Activated naive CD4-positive, alpha-beta T cell treated with anti-CD3 and anti-CD28 coated beads for 36 hours (primary cell): ENCODE measurements at regions of chr1 and their contacts with region 1.

Region 1: GRCh38 chr1:25997828-25998761 is at the start of gene PAFAH2:
- DNase-seq: peak; percentile 99
- H3K4me3 Mint-ChIP-seq: peak within 1 kb of the TSS; percentile 97
- H3K27ac Mint-ChIP-seq: peak within 1 kb of the TSS; percentile 94
- H3K4me1 Mint-ChIP-seq: peaks cover 20% of the 10 kb centered on the region
- H3K27me3 Mint-ChIP-seq: no peaks in the 10 kb centered on the region
- total RNA-seq, gene PAFAH2: 4.7 to 5.2 TPM

Region 2: DNA sequence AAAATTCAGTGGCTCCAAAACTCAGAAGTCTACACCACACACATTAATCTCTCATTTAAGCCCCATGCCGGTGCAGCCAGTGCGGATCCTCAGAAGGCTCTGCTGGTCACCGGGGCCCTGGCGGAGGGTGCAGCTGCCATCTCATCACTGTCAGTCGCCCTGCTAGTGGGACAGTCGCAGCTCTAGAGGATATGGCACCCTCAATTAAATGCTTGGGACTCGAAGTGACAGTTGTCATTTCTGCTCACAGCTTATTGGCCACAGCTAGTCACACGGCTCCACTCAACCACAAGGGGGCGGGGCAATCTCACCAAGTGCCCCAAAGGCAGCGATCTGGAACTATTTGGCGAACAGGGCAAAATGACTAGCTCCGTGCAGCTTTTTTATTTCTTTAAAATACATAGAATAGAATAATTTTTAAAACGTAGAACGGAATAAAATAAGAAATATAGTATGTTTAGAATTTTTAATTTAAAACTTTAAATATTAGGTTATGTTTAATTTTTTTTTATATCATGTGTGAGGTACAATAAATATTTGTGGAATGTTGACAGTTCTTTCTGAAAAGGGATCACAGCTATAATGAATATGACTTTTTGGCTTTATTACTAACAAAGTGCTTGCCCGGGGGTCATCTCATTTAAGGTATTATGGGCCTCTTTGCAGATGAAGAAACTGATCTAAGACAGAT is 389.5 kb before region 1 on chr1:
- CTCF ChIA-PET with region 1: no interaction called
- intact Hi-C with region 1: loop called (anchors 1 kb)
- DNase-seq: peak; percentile 96
- H3K4me3 Mint-ChIP-seq: no peak overlapping the region
- H3K27ac Mint-ChIP-seq: no peak overlapping the region
- H3K4me1 Mint-ChIP-seq: peaks cover 11% of the 10 kb centered on the region
- H3K27me3 Mint-ChIP-seq: no peaks in the 10 kb centered on the region

Region 3: GRCh38 chr1:25837262-25837875 is 160.7 kb before region 1 on chr1:
- CTCF ChIA-PET with region 1: no interaction called
- intact Hi-C with region 1: loop called (anchors 2 kb)
- DNase-seq: no peak
- H3K4me3 Mint-ChIP-seq: no peak overlapping the region
- H3K27ac Mint-ChIP-seq: no peak overlapping the region
- H3K4me1 Mint-ChIP-seq: peaks cover 1% of the 10 kb centered on the region
- H3K27me3 Mint-ChIP-seq: no peaks in the 10 kb centered on the region

Region 4: DNA sequence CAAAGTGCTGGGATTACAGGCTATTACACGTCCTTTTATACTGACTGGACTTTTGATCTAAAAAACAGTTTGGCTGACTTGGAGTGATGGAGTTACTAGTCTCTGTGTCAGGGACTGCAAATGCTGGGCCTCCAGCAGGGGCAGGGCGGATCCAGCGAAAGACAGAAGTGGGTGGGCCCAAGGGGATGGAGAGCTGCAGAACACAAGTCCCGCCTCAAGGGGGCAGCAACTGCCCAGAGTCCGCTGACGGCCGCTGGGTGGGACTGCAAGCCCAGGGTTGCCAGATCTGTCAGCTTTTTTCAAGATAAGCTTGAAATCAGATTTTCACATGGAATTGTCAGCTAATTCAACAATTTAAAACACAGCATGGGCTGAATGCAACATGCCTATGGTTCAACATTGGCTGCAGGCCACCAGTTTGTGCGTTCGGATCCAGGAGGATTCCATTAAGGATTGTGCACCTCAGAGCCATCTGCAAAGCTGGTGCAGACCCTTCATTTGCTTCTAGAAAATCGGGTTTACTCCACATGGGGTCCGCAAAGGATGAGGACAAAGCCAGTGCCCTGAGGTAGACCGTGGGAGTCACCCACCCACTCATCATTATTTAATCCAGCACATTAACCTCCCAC is 102.6 kb before region 1 on chr1:
- CTCF ChIA-PET with region 1: interaction called, 154 read pairs
- intact Hi-C with region 1: loop called (anchors 1 kb)
- DNase-seq: peak; percentile 92
- H3K4me3 Mint-ChIP-seq: no peak overlapping the region
- H3K27ac Mint-ChIP-seq: no peak overlapping the region
- H3K4me1 Mint-ChIP-seq: peaks cover 17% of the 10 kb centered on the region
- H3K27me3 Mint-ChIP-seq: no peaks in the 10 kb centered on the region

Region 5: DNA sequence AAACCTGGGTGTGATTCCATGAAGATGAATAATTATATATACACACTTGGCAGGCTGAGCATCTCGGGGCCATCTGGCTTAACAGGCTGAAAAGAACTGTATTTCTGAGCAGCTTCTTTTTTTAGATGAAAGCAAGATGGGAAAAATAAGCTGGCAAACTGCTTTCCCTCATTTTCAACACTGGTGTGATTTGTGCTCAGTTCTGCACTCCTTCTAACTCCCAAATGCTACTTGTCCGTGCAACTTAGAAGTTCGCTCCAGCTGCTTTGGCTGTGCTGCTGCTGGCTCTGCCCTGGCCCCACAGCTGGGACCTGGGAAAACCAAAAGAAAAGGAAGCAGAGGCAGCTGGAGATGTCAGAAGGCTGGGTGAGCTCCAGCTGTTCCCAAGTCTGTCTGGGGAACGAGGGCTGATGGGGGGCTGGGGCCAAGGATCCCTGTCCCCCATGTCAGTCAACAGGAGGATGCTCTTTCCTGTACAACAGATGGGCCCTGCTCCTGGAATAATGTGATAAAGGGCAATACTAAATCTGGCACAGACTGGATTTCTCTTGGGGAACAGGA is 45.2 kb before region 1 on chr1:
- CTCF ChIA-PET with region 1: no interaction called
- intact Hi-C with region 1: no loop called
- DNase-seq: no peak
- H3K4me3 Mint-ChIP-seq: no peak overlapping the region
- H3K27ac Mint-ChIP-seq: no peak overlapping the region
- H3K4me1 Mint-ChIP-seq: peaks cover 3% of the 10 kb centered on the region
- H3K27me3 Mint-ChIP-seq: no peaks in the 10 kb centered on the region

Region 6: DNA sequence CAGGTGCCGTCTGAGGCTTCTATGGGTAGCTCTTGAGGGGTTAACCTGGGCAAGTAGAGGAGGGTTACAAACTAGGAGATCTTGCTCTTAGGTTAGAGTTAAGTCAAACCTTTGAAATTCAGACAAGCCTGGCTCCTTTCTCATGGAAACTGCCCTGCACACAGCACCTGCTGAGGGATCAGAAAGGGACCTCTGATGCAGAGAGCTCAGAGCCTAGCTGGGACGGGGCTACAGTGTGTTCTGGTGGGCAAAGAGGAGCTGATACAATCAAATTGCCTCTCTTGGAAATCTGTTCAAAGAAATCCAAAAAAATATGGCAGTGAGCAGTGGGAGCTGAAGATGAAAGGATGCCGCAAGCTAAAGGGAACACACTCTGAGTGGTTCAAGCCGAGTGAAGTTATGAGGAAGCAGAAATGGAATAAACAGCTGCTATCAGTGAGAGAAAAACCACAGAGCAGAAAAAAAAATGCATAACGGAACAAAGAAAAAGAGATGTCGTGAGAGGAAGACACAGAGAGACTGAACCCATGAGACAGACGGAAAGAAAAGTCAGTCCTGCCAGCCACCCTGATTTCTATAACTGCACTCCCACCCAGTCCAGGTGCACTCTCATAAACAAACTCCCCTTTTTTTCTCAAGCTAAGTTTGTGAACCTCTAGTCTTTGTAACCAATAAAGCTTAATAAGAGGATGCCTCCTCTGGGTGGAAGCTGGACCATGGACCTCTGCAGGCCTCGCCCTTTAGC is 26.9 kb before region 1 on chr1:
- CTCF ChIA-PET with region 1: interaction called, 5 read pairs
- intact Hi-C with region 1: loop called (anchors 1 kb)
- DNase-seq: peak; percentile 33
- H3K4me3 Mint-ChIP-seq: no peak overlapping the region
- H3K27ac Mint-ChIP-seq: peak overlapping the region; percentile 89
- H3K4me1 Mint-ChIP-seq: peaks cover 31% of the 10 kb centered on the region
- H3K27me3 Mint-ChIP-seq: no peaks in the 10 kb centered on the region